CD4-positive, alpha-beta memory T cell (primary cell): ENCODE measurements at regions of chrX and their contacts with region 1.

Region 1: GRCh38 chrX:110992611-110993010 is 103.4 kb upstream of the PAK3 start:
- DNase-seq: peak; percentile 13 to 37 (median 33)
- H3K4me3 ChIP-seq: no peak overlapping the region
- H3K4me3 Mint-ChIP-seq: no peak overlapping the region
- H3K27ac ChIP-seq: no peak overlapping the region
- H3K27ac Mint-ChIP-seq: no peak overlapping the region
- H3K4me1 ChIP-seq: no peaks in the 10 kb centered on the region
- H3K4me1 Mint-ChIP-seq: no peaks in the 10 kb centered on the region
- H3K27me3 ChIP-seq: no peaks in the 10 kb centered on the region
- H3K27me3 Mint-ChIP-seq: peaks cover 6 to 10% of the 10 kb centered on the region in 2 donors

Region 2: GRCh38 chrX:111244235-111244750 is 251.7 kb after region 1 on chrX:
- CTCF ChIA-PET with region 1: interaction called, 3 read pairs
- POLR2A ChIA-PET with region 1: no interaction called
- intact Hi-C with region 1: loop called (anchors 1 kb)
- DNase-seq: peak in 3 of 5 donors; percentile 2 to 9 (median 4)
- H3K4me3 ChIP-seq: no peak overlapping the region
- H3K4me3 Mint-ChIP-seq: no peak overlapping the region
- H3K27ac ChIP-seq: no peak overlapping the region
- H3K27ac Mint-ChIP-seq: no peak overlapping the region
- H3K4me1 ChIP-seq: no peaks in the 10 kb centered on the region
- H3K4me1 Mint-ChIP-seq: no peaks in the 10 kb centered on the region
- H3K27me3 ChIP-seq: no peaks in the 10 kb centered on the region
- H3K27me3 Mint-ChIP-seq: peaks cover 4 to 10% of the 10 kb centered on the region in 2 donors

Region 3: GRCh38 chrX:111445486-111445885 is 452.9 kb after region 1 on chrX:
- CTCF ChIA-PET with region 1: no interaction called
- POLR2A ChIA-PET with region 1: no interaction called
- intact Hi-C with region 1: loop called (anchors 5 kb)
- DNase-seq: peak in 4 of 5 donors; percentile 16 to 35 (median 30)
- H3K4me3 ChIP-seq: no peak overlapping the region
- H3K4me3 Mint-ChIP-seq: no peak overlapping the region
- H3K27ac ChIP-seq: no peak overlapping the region
- H3K27ac Mint-ChIP-seq: no peak overlapping the region
- H3K4me1 ChIP-seq: no peaks in the 10 kb centered on the region
- H3K4me1 Mint-ChIP-seq: peaks cover 0 to 2% (median 0%) of the 10 kb centered on the region in 4 donors
- H3K27me3 ChIP-seq: no peaks in the 10 kb centered on the region
- H3K27me3 Mint-ChIP-seq: peaks cover 0 to 5% of the 10 kb centered on the region in 2 donors